Activated T-helper 2 cell treated with anti-CD3 and anti-CD28 coated beads, Interferon-gamma antibody, Interleukin-2, Interleukin-4, amounts not matched to agents 10 μg/mL and 5 μg/mL and 100 μg/mL, durations not matched to agents 14 hours and 24 hours and 36 hours (primary cell): ENCODE measurements at regions of chr16 and their contacts with region 1.

Region 1: GRCh38 chr16:67928561-67929364 is 2.9 kb downstream of the CTRL start:
- DNase-seq: peak; percentile 68
- H3K4me3 Mint-ChIP-seq: no peak overlapping the region
- H3K27ac Mint-ChIP-seq: no peak overlapping the region
- H3K4me1 Mint-ChIP-seq: peaks cover under 1% of the 10 kb centered on the region
- H3K27me3 Mint-ChIP-seq: no peaks in the 10 kb centered on the region

Region 2: DNA sequence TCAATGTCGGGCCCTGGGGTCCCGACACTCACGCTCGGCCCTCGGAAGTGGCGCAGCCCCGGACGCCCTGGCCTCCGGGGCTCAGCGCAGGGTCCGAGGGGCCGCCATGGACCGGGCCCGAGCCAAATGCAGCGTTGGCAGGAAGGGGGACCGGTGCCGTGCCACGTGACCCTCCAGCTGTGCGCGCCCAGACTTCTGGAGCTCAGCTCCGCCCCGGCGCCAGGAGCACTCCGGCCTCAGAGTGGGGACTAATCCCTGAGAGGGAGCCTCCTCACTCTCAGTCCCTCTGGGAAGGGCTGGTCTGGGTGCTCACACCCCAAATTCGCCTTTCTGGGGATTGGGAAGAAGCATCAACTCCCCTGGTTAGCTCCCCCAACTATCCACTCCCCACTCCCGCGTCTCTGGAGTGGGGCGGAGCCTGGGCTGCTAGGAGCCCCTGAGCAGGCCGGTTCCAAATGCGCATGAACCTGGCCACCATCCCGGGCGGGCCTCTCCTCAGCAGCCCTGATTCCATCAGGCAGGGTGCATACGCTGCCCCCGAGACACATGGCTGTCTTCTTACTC is 777.8 kb before region 1 on chr16 and contains the start of gene B3GNT9:
- intact Hi-C with region 1: no loop called
- DNase-seq: no peak
- H3K4me3 Mint-ChIP-seq: peak within 1 kb of the TSS; percentile 74
- H3K27ac Mint-ChIP-seq: no peak within 1 kb of the TSS
- H3K4me1 Mint-ChIP-seq: peaks cover 21% of the 10 kb centered on the region
- H3K27me3 Mint-ChIP-seq: peaks cover 1% of the 10 kb centered on the region
- total RNA-seq, gene B3GNT9: 5.0 and 5.1 TPM in 2 replicates

Region 3: DNA sequence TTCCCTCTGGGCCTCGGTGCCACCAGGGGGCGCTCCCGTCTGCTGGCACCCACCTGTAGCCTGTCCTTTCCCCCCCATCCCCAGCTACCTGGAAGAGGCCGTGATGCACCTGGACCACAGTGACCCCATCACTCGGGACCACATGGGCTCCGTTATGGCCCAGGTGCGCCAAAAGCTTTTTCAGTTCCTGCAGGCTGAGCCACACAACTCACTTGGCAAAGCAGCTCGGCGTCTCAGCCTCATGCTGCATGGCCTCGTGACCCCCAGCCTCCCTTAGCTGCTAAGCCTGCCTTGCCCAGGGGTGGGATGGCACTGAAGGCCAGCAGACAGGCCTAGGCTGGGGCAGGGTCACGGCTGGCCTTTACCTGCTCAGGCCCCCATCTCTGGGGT is 44.9 kb before region 1 on chr16:
- intact Hi-C with region 1: loop called (anchors 1 kb)
- DNase-seq: peak; percentile 52
- H3K4me3 Mint-ChIP-seq: no peak overlapping the region
- H3K27ac Mint-ChIP-seq: no peak overlapping the region
- H3K4me1 Mint-ChIP-seq: no peaks in the 10 kb centered on the region
- H3K27me3 Mint-ChIP-seq: no peaks in the 10 kb centered on the region